ENCODE measurements at regions of chr19 and their contacts with region 1.

Region 1: GRCh38 chr19:35044317-35045117 is 3.0 kb downstream of the HPN start:
- DNase-seq: peak; percentile 76 to 95
- ATAC-seq: peak; percentile 4 to 42; a peak in 4 of 6 replicates
- H3K4me3 ChIP-seq: no peak overlapping the region
- H3K27ac ChIP-seq: no peak overlapping the region
- H3K4me1 ChIP-seq: peaks cover 29% of the 10 kb centered on the region
- CTCF ChIP-seq: peak; percentile 99
- EP300 ChIP-seq: no peak
- POLR2A ChIP-seq: no peak
- RAD21 ChIP-seq: peak; percentile 76 to 82

Region 2: GRCh38 chr19:34766386-34766785 is 278.1 kb before region 1 on chr19:
- CTCF ChIA-PET with region 1: no interaction called
- POLR2A ChIA-PET with region 1: no interaction called
- DNase-seq: no peak
- ATAC-seq: no peak
- H3K4me3 ChIP-seq: no peak overlapping the region
- H3K27ac ChIP-seq: no peak overlapping the region
- H3K4me1 ChIP-seq: no peaks in the 10 kb centered on the region
- CTCF ChIP-seq: no peak
- EP300 ChIP-seq: no peak
- POLR2A ChIP-seq: no peak
- RAD21 ChIP-seq: no peak

Region 3: DNA sequence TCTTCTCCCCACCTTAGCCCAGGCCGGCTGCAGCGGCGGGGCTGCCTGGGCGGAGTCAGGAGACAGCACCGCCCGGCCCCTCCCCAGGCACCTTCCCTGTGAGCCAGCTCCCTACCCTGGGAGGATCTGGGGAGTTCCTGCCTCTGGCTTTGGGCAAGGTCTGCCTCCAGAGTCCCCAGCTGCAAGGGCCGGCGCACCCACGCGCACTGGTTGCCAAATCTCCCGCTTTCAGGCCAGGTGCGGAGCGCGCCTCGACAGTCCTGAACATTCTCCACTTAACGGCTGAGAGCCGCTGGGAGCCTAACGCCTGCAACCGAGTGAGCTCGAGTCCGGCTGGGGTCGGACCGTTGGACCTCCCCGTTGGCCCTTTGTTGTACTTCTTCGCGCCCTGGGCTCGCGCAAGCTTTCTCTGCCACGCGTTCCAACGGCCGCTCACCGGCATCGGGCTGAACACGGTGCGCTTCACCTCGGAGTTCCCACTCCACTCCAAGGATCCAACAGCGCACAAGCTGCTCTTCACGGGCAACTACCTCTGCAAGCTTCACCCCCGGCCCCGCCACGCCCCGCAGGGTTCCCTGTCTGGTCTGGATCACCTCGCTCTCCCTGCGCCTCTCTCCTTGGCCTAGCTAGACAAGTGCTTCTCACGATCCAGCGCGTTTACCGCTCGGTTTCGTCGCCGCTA is 139.5 kb before region 1 on chr19:
- CTCF ChIA-PET with region 1: no interaction called
- POLR2A ChIA-PET with region 1: no interaction called
- DNase-seq: no peak
- ATAC-seq: peak in 1 of 2 experiments; percentile 23; a peak in 2 of 6 replicates
- H3K4me3 ChIP-seq: no peak overlapping the region
- H3K27ac ChIP-seq: no peak overlapping the region
- H3K4me1 ChIP-seq: no peaks in the 10 kb centered on the region
- CTCF ChIP-seq: no peak
- EP300 ChIP-seq: no peak
- POLR2A ChIP-seq: no peak
- RAD21 ChIP-seq: no peak

Region 4: DNA sequence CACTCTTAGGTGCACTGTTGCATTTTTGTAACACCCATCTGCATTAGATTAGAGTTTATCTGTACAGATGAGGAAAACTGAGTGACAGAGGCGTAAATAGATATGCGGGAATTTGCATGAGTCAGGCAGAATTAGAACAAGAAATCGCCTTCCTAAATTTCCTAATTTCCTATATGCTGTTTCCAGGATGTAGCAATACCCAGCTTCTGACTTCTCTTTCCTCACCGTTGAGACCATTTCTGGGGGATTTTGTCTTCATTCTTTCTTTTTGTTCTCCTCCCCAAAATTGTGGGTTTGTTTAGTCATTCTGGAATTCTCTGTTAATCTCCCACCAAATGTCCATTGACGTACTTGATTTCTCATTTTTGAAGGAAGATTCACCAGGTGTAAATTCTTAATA is 69.9 kb before region 1 on chr19:
- CTCF ChIA-PET with region 1: interaction called, 253 read pairs
- POLR2A ChIA-PET with region 1: no interaction called
- DNase-seq: no peak
- ATAC-seq: no peak
- H3K4me3 ChIP-seq: no peak overlapping the region
- H3K27ac ChIP-seq: peak overlapping the region in 1 of 2 experiments; percentile 75; a peak in 2 of 6 replicates
- H3K4me1 ChIP-seq: peaks cover 18% of the 10 kb centered on the region
- CTCF ChIP-seq: no peak
- EP300 ChIP-seq: no peak
- POLR2A ChIP-seq: no peak
- RAD21 ChIP-seq: no peak

Region 5: GRCh38 chr19:34999498-35000341 is 44.8 kb before region 1 on chr19 and contains the start of gene GRAMD1A:
- CTCF ChIA-PET with region 1: interaction called, 19 read pairs
- POLR2A ChIA-PET with region 1: interaction called, 4 read pairs
- DNase-seq: peak; percentile 98 to 99
- ATAC-seq: peak; percentile 73 to 77
- H3K4me3 ChIP-seq: peak within 1 kb of the TSS; percentile 91
- H3K27ac ChIP-seq: peak within 1 kb of the TSS; percentile 94 to 95
- H3K4me1 ChIP-seq: peaks cover 80% of the 10 kb centered on the region
- CTCF ChIP-seq: no peak
- EP300 ChIP-seq: peak; percentile 6 to 58; a peak in 3 of 5 replicates
- POLR2A ChIP-seq: peak; percentile 64
- RAD21 ChIP-seq: peak in 1 of 2 experiments; percentile 28; a peak in 2 of 5 replicates
- polyA plus RNA-seq, gene GRAMD1A: 184 and 221 TPM in 2 replicates

Region 6: DNA sequence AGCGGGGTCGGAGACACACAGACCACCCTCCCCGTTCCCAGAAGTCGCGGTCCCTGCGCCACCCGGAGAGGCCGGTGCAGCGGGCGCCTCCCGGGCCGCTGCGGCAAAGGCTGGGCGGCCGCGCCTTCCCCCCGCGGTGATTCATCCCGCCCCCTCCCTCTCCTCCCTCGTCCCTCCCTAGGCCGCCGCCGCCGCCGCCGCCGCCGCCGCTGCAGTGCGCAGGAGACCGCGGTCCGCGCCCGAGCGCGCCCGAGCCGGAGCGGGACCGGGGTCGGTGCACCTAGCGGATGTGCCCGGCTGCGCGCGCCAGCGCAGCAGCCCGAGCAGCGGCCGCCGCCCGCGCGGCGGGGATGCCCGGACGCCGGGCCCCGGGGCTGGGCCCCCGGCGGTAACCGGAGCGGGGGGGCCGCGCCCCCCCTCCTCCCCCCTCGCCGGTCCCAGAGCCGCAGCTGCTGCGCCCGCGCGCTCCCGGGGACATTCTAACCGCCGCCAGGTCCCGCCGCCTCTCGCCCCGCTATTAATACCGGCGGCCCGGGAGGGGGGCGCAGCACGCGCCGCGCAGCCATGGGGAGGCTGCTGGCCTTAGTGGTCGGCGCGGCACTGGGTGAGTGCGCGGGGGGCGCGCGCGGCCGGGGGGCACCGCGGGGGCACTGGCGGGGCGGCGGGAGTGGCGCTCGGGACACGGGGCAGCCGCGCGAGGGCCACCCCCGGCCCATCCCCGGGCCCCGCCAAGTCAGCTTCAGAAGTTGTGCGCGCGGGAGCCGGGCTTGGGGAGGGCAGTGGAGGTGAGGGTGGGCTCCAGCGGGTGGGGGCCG is 14.1 kb before region 1 on chr19 and contains the start of gene SCN1B:
- CTCF ChIA-PET with region 1: interaction called, 182 read pairs
- POLR2A ChIA-PET with region 1: no interaction called
- DNase-seq: peak; percentile 85 to 91
- ATAC-seq: peak; percentile 54 to 82
- H3K4me3 ChIP-seq: peak within 1 kb of the TSS; percentile 73
- H3K27ac ChIP-seq: peak within 1 kb of the TSS; percentile 77 to 91
- H3K4me1 ChIP-seq: peaks cover 12% of the 10 kb centered on the region
- CTCF ChIP-seq: no peak; the same call in 1 of the 3 replicates
- EP300 ChIP-seq: no peak
- POLR2A ChIP-seq: no peak
- RAD21 ChIP-seq: no peak
- polyA plus RNA-seq, gene SCN1B: 11.0 and 12.8 TPM in 2 replicates

Region 7: DNA sequence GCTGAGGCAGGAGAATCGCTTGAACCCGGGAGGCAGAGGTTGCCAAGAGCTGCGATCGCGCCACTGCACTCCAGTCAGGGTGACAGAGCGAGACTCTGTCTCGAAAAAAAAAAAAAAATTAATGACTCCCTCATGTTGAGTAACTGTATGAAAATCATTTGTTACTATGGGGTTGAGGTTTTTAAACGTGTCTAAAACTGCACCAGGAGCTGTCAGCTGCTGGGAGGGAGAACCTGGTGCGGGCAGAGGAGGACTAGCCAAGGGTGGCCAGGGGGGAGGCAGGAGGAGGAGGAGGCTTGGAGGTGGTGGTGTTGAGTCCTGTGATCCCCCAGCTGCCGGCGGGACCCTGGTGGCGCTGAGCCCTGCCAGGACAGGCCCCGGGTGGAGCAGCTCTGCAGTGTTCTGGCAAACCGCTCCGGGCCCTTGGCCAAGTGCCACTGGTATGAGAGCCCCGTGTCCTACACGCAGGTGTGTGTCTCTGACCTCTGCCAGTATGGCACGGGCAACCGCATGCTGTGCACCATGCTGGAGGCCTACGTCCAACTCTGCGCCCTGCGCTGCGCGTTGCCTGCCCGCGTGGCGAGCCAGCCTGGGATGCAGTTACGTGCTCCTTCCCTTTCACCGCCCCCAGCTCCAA is 54.0 kb after region 1 on chr19:
- CTCF ChIA-PET with region 1: interaction called, 63 read pairs
- POLR2A ChIA-PET with region 1: no interaction called
- DNase-seq: no peak
- ATAC-seq: peak; percentile 22 to 37; a peak in 4 of 6 replicates
- H3K4me3 ChIP-seq: no peak overlapping the region
- H3K27ac ChIP-seq: no peak overlapping the region
- H3K4me1 ChIP-seq: no peaks in the 10 kb centered on the region
- CTCF ChIP-seq: no peak
- EP300 ChIP-seq: no peak
- POLR2A ChIP-seq: no peak
- RAD21 ChIP-seq: no peak

Region 8: GRCh38 chr19:35135389-35135909 is 90.9 kb after region 1 on chr19:
- CTCF ChIA-PET with region 1: interaction called, 58 read pairs
- POLR2A ChIA-PET with region 1: no interaction called
- DNase-seq: peak; percentile 81 to 99
- ATAC-seq: peak; percentile 64 to 91
- H3K4me3 ChIP-seq: no peak overlapping the region
- H3K27ac ChIP-seq: no peak overlapping the region
- H3K4me1 ChIP-seq: peaks cover 5% of the 10 kb centered on the region; the same call in 1 of the 3 replicates
- CTCF ChIP-seq: peak; percentile 95
- EP300 ChIP-seq: no peak
- POLR2A ChIP-seq: no peak
- RAD21 ChIP-seq: peak; percentile 76 to 86

Measured in A549 (cell line).